ENCODE measurements at regions of chr6 and their contacts with region 1.

Region 1: DNA sequence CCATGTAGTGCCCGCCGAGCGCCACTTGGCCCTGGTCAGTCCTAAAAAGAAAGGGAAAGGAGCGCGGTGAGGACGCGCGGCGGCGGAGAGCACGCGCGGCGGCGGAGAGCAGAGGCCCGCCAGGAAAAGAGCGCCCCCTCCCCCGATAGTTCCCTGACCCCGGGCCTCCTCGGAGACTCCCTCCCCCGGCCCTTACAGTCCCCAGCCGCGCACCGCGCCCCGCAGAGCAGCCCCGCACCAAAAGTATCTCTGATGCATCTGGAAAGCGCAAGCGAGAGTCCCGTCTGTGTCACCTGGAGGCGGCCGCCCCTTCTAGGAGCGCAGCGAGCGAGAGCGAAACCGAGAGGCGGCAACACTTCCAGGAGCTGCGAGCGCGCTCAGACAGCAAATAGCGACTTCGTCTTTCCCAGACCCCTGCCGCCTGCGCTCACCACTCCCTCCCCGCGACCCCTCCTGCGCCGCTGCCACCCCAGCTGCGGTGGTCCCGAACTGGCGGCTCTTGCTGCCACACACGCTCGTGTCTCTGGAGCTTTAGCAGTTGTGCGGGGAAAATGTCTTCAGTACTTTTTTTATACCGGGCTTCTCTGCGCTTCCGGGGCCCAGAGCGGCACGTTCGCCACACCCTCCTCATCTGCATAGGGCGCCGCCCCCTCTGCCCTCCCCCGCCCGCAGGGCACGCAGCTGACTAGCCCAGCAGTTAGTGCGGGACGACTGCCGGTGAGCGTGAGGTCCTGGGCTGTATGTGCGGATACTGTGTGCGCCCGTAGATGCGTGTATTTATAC is at the start of gene TENT5A:
- DNase-seq: peak; percentile 93
- ATAC-seq: peak; percentile 85 to 92
- total RNA-seq, gene TENT5A: 30.0 to 36.6 TPM

Region 2: DNA sequence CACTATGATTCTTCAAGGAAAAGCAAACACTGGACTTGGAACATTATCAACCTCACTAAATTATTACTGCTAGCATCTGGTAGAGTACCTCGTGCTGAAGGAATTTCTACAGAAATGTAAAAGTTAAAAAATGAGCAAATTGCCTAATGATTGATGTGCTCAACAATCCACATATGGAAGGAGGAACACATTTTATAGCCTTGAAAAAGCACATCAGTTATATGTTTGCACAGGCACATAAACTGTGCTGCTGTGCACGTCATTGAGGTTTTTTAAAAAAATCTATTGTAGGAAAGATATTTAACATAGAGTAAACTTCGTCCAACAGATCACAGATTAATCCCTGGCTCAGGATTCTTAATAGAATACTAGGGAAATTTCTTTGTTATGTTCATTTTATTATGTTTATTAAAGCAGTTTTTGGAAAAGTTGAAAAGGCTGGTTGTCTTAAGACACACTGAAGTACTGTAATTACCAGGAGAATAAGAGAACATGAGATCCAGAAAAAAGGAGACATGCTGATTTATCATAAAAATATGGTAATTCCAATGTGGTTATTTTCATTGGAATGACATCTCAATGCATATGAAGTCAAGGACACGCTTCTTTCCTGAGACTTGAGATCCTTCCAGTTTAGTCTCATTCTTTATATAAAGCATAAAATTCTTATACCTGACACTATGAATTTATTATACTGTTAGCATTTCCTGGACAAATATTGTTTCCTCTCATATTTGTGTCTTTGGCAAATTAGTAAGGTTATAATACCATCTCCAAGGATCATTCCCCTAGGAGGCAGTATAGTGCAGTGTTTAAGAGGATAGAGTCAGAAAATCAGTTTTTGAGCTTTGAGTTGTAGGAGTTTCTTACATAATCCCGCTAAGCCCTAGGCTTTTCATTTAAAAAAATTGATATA is 510.9 kb before region 1 on chr6:
- intact Hi-C with region 1: loop called in 1 of 2 experiments (anchors 5 kb)
- DNase-seq: no peak
- ATAC-seq: peak in 1 of 2 donors; percentile 57

Region 3: DNA sequence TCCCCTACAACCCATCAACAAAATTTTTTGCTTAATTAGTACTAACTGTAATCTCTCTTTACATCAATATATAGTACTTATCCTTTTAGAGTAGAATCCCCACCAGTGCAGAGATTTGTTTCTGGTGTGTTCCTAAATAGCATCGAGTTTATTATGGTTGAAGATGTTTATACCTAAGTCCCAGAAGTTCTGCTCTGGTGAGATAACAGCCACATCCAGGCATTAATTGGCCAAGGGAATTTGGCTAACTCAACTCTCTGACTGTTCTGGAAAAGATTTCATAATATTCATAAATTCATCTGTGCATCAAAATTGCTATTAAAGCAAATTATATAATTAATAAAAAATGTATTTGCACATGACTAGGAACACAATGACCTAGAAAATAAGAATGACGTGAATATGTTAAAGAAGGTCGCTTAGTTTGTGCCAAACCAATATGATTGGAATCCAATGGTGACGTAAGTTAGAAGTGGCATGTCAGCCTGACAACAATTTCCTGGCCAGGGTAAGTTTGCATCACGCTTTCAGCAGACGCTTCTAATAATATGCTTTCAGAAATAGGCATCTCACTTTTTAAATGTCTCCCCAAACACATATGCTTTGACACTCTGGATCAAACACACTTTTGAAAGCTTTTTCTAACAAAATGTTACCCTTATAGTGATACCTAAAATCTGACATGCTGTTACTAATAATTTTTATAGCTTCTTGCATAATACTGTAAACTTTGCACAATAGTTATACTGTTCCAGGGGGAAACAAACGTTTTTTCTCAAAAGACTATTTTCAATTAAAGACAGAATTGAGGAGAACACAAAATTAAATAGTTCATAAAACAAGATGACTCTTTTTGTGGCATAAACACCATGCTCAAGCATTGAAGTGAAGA is 236.5 kb before region 1 on chr6:
- intact Hi-C with region 1: loop called in 1 of 2 experiments (anchors 10 kb)
- DNase-seq: peak; percentile 25
- ATAC-seq: peak in 1 of 2 donors; percentile 38

Region 4: GRCh38 chr6:81787313-81788068 is 35.2 kb after region 1 on chr6:
- intact Hi-C with region 1: no loop called
- DNase-seq: no peak
- ATAC-seq: peak in 1 of 2 donors; percentile 60

Region 5: GRCh38 chr6:81797591-81797990 is 45.3 kb after region 1 on chr6:
- intact Hi-C with region 1: no loop called
- DNase-seq: no peak
- ATAC-seq: peak in 1 of 2 donors; percentile 54

Region 6: DNA sequence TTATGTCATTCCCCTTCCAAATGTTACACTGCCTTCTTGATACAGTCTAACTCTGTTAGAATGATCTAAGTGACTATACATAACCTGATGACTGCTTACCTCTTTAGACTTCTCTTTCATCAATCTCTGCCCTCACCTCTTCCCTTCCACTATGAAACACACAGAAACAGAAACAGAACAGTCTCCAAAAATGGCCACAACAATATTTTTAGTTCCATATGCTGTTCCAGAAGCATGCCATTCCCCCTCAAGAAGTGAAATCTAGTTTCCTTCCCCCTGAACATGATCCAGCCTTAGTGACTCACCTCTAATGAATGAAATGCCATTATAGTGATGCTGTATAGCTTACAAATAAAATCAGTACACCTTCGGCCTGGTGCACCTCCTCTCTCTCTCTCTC is 229.5 kb after region 1 on chr6:
- intact Hi-C with region 1: loop called in 1 of 2 experiments (anchors 10 kb)
- DNase-seq: no peak
- ATAC-seq: peak in 1 of 2 donors; percentile 48

Region 7: DNA sequence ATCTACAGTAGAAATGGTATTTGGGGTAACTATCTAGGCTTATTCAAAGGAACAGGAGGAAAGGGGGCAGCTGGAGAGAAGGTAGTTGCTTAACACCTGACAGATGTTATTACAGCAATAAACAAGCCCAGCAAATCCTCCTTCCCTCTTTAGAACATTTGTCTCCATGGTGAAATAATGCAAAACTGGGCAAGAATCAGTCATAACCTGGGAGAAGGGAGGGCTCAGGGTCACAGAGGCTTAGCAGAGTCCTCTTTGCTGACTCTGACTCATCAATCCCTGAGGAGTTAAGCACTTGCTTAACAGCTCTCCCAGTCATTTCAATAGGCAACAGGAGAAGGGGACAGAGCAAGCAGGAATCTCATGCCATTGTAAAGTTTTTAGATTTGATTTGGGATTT is 265.0 kb after region 1 on chr6:
- intact Hi-C with region 1: no loop called
- DNase-seq: peak; percentile 42
- ATAC-seq: peak; percentile 80 to 91

Region 8: DNA sequence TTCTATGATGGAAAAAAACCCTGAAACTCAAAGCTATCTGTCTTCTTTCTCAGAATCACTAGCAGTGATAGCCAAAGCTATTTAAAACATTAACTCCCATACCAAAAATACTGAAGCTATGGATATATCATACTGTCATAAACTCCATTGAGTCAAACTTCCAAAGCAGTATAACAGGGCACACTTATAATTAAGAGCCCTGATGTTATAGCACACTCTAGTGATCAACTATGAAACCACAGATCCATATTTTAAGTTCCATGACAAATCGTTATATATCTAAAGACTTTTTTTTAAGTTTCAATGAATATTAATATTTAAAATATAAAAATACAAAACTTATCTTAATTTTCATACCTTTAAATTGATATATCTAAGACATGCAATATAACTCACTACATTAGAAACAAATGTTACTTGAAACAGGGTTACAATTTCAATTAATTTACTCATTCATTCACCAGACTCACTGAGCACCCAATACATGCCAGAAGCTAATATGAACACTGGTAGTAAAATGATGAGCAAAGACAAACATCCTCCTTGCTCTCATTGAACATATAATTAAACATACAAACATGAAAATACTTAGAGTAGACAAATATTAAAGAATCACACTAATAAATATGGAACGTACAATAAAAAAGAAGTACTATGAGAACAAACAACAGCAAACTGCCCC is 425.9 kb after region 1 on chr6:
- intact Hi-C with region 1: loop called in 1 of 2 experiments (anchors 10 kb)
- DNase-seq: no peak
- ATAC-seq: peak; percentile 65 to 76

Measured in left cardiac atrium (tissue), 4 donors.